ENCODE measurements at regions of chr21 and their contacts with region 1.

Region 1: DNA sequence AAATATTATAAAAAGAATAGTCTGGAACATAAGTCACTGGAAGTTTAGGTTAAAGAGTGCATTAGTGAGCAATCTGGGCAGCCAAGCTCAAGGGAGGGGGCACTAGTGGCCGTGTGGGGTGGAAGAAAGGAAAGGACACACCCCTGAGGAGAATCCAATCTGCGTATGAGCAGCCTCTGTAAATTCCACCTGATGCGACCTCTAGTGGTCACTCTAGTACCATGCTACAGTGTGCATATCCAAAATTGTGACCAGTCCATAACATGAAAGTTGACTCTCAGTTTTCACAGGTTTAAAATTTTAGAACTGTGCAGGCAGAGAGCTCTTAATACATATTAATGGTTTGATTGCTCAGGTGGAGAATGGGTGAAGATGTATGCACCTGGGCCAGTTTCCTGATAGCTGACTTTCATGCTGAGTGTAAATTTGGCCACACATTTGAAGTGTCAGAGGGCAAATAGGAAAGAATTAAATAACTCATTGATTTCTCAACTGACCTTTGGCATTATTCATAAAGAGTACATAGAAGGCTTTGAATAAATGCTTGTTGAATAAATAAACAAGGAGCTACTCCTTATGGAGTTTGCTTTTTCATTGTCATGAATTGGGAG is 105.9 kb upstream of the C21orf91 start:
- DNase-seq: peak; percentile 33
- ATAC-seq: peak; percentile 100
- H3K4me3 ChIP-seq: no peak overlapping the region
- H3K27ac ChIP-seq: no peak overlapping the region
- H3K4me1 ChIP-seq: no peaks in the 10 kb centered on the region
- H3K27me3 ChIP-seq: no peaks in the 10 kb centered on the region
- CTCF ChIP-seq: peak; percentile 82 to 91 (median 87)
- EP300 ChIP-seq: no peak
- POLR2A ChIP-seq: no peak
- RAD21 ChIP-seq: peak; percentile 76

Region 2: GRCh38 chr21:17667256-17667655 is 257.8 kb before region 1 on chr21:
- CTCF ChIA-PET with region 1: interaction called, 25 read pairs
- POLR2A ChIA-PET with region 1: no interaction called
- RAD21 ChIA-PET with region 1: no interaction called
- SMC1A ChIA-PET with region 1: interaction called, 4 read pairs
- in situ Hi-C with region 1: no loop called
- intact Hi-C with region 1: no loop called
- DNase-seq: no peak
- ATAC-seq: no peak
- H3K4me3 ChIP-seq: no peak overlapping the region
- H3K27ac ChIP-seq: no peak overlapping the region
- H3K4me1 ChIP-seq: no peaks in the 10 kb centered on the region
- H3K27me3 ChIP-seq: no peaks in the 10 kb centered on the region
- CTCF ChIP-seq: no peak
- EP300 ChIP-seq: no peak
- POLR2A ChIP-seq: no peak
- RAD21 ChIP-seq: no peak

Region 3: GRCh38 chr21:17679002-17679600 is 246.0 kb before region 1 on chr21:
- CTCF ChIA-PET with region 1: interaction called, 38 read pairs
- POLR2A ChIA-PET with region 1: interaction called, 6 read pairs
- RAD21 ChIA-PET with region 1: interaction called, 21 read pairs
- SMC1A ChIA-PET with region 1: interaction called, 46 read pairs
- in situ Hi-C with region 1: no loop called
- intact Hi-C with region 1: loop called (anchors 1 kb)
- DNase-seq: peak; percentile 48
- ATAC-seq: peak; percentile 95
- H3K4me3 ChIP-seq: no peak overlapping the region
- H3K27ac ChIP-seq: no peak overlapping the region
- H3K4me1 ChIP-seq: no peaks in the 10 kb centered on the region
- H3K27me3 ChIP-seq: no peaks in the 10 kb centered on the region
- CTCF ChIP-seq: peak; percentile 70 to 89 (median 76); a peak in 5 of 6 replicates
- EP300 ChIP-seq: no peak
- POLR2A ChIP-seq: no peak
- RAD21 ChIP-seq: peak; percentile 97

Region 4: GRCh38 chr21:17903029-17903806 is 21.9 kb before region 1 on chr21:
- CTCF ChIA-PET with region 1: interaction called, 26 read pairs
- POLR2A ChIA-PET with region 1: no interaction called
- RAD21 ChIA-PET with region 1: interaction called, 6 read pairs
- SMC1A ChIA-PET with region 1: interaction called, 7 read pairs
- in situ Hi-C with region 1: no loop called
- intact Hi-C with region 1: no loop called
- DNase-seq: no peak
- ATAC-seq: peak; percentile 68
- H3K4me3 ChIP-seq: no peak overlapping the region
- H3K27ac ChIP-seq: no peak overlapping the region
- H3K4me1 ChIP-seq: peaks cover 3% of the 10 kb centered on the region
- H3K27me3 ChIP-seq: no peaks in the 10 kb centered on the region
- CTCF ChIP-seq: peak in 1 of 3 experiments; percentile 40; a peak in 1 of 6 replicates
- EP300 ChIP-seq: no peak
- POLR2A ChIP-seq: no peak
- RAD21 ChIP-seq: peak; percentile 49; the same call in 1 of the 2 replicates